PC-3 (cell line): ENCODE measurements at regions of chr1 and their contacts with region 1.

Region 1: DNA sequence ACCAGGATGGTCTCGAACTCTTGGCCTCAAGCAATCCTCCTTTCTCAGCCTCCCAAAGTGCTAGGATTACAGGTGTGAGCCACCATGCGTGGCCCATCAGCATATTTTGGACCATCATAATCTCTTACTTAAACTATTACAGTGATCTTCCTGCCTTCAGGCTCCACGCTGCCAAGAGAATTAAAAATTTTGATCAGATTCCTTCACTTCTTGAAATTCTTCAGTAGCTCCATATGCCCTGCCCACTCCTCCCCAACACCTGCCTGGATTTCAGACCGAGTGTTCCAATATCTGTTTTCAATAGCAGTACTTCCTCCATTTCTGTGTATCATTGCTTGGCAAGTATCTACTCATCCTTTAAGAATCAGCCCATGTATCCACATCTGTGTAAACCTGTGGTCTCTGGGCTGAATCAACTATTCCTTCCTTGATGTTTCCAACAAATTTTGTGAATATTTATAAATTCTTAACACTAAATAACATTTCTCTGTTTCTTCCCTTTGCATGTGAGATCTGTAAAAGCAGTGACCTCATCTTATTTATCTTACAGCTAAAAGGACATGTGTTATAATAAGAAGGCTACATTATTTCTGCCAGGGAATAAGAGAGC is 26.1 kb upstream of the UAP1 start:
- DNase-seq: no peak
- ATAC-seq: no peak
- H3K4me3 ChIP-seq: no peak overlapping the region
- H3K27ac ChIP-seq: no peak overlapping the region
- H3K4me1 ChIP-seq: peaks cover 37% of the 10 kb centered on the region
- H3K27me3 ChIP-seq: no peaks in the 10 kb centered on the region
- CTCF ChIP-seq: no peak

Region 2: DNA sequence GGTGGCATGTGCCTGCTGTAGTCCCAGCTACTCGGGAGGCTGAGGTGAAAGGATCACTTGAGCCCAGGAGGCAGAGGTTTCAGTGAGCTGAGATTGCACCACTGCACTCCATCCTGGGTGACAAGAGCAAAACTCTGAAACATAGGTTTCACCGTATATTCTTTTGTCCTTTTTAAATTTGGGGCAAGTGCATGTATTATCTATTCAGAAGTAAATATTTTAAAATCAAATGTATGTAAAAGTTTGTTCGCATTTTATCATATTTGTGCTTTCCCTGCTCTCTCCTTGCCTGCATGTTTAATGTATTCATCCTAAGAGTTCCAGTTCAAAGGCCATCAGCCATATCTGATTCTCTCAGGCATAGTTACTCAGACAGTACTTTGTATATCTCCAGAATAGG is 1389.6 kb before region 1 on chr1:
- CTCF ChIA-PET with region 1: no interaction called
- POLR2A ChIA-PET with region 1: interaction called, 27 read pairs
- intact Hi-C with region 1: no loop called
- DNase-seq: no peak
- ATAC-seq: no peak
- H3K4me3 ChIP-seq: no peak overlapping the region
- H3K27ac ChIP-seq: no peak overlapping the region
- H3K4me1 ChIP-seq: no peaks in the 10 kb centered on the region
- H3K27me3 ChIP-seq: no peaks in the 10 kb centered on the region
- CTCF ChIP-seq: no peak

Region 3: GRCh38 chr1:162485236-162485635 is 50.2 kb before region 1 on chr1:
- CTCF ChIA-PET with region 1: no interaction called
- POLR2A ChIA-PET with region 1: no interaction called
- intact Hi-C with region 1: no loop called
- DNase-seq: no peak
- ATAC-seq: no peak
- H3K4me3 ChIP-seq: no peak overlapping the region
- H3K27ac ChIP-seq: no peak overlapping the region
- H3K4me1 ChIP-seq: no peaks in the 10 kb centered on the region
- H3K27me3 ChIP-seq: no peaks in the 10 kb centered on the region
- CTCF ChIP-seq: no peak

Region 4: DNA sequence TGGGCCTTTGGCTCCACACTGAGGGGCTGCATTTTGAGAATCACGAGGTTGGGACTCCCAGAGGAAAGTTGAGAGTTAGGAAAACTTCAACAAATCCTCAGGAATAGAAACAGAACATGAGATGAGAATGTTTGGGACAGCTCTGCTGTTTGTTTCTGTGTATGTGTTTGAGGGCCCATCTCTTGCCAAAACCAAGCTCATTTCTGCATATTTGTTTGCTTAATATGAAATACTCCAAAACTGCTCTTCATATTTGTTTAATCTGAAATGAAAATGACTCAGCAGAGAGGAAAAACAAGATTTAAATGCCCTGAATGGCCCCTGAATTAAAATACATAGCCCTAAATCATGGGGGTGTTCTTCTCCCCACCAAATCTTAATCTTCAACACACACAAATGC is 174.9 kb after region 1 on chr1:
- CTCF ChIA-PET with region 1: no interaction called
- POLR2A ChIA-PET with region 1: no interaction called
- intact Hi-C with region 1: no loop called
- DNase-seq: peak; percentile 84
- ATAC-seq: peak; percentile 91
- H3K4me3 ChIP-seq: no peak overlapping the region
- H3K27ac ChIP-seq: peak overlapping the region; percentile 36; the same call in 1 of the 2 replicates
- H3K4me1 ChIP-seq: peaks cover 26% of the 10 kb centered on the region
- H3K27me3 ChIP-seq: no peaks in the 10 kb centered on the region
- CTCF ChIP-seq: no peak